PC-3 (cell line): ENCODE measurements at regions of chr14 and their contacts with region 1.

Region 1: DNA sequence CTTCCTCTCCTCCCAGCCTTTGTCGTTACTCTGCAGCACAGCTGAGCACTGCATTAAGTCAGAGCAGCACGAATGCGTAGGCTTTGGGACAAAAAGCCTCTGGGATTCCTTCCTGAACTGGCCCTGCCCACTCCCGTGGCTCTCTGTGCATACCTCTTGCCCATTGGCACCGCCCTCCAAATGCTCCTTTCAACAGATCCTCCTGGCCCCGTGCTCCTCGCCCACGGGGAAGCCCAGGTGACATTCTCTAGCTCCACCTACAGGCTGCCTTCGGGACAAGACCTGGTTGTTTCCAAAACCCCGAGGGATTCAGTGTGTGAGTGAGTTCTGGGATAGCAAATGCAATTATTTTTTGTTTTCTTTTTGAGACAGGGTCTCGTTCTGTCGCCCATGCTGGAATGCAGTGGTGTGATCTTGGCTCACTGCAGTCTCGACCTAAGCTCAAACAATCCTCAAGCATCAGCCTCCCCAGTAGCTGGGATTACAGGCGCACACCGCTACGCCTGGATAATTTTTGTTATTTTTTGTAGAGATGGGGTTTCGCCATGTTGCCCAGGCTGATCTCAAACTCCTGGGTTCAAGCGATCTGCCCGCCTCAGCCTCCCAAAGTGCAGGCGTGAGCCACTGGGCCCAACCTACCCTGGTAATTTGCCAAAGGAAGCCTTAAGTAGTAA is 17.9 kb upstream of the TDRD9 start:
- DNase-seq: peak; percentile 96
- ATAC-seq: peak; percentile 100
- H3K4me3 ChIP-seq: peak overlapping the region; percentile 20; the same call in 1 of the 2 replicates
- H3K27ac ChIP-seq: no peak overlapping the region
- H3K4me1 ChIP-seq: peaks cover 5% of the 10 kb centered on the region; the same call in 1 of the 2 replicates
- H3K27me3 ChIP-seq: no peaks in the 10 kb centered on the region
- CTCF ChIP-seq: peak; percentile 92

Region 2: DNA sequence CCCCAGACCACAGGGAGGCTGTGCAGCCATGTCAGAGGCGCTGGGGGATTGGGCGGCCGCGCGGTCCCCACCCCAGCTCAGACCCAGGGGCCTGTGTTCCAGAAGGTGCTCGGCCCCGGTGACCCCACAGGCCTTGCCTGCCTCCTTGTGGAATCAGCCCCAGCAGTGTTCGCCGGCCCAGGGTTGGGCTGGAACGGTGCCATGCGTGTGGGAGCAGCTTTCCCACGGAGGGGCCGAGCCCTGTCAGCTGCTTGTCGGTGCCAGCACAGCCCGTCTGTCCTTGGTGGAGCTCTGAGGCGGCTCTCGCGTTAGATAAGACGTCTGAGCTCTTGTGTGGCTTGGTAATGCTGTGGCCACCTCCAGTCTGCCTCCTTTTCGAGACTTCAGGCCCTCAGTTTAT is 186.3 kb before region 1 on chr14:
- CTCF ChIA-PET with region 1: no interaction called
- POLR2A ChIA-PET with region 1: no interaction called
- intact Hi-C with region 1: loop called (anchors 5 kb)
- DNase-seq: no peak
- ATAC-seq: no peak
- H3K4me3 ChIP-seq: no peak overlapping the region
- H3K27ac ChIP-seq: no peak overlapping the region
- H3K4me1 ChIP-seq: peaks cover 14% of the 10 kb centered on the region
- H3K27me3 ChIP-seq: no peaks in the 10 kb centered on the region
- CTCF ChIP-seq: no peak

Region 3: GRCh38 chr14:103808403-103809001 is 101.9 kb before region 1 on chr14:
- CTCF ChIA-PET with region 1: interaction called, 12 read pairs
- POLR2A ChIA-PET with region 1: no interaction called
- intact Hi-C with region 1: loop called (anchors 1 kb)
- DNase-seq: peak; percentile 88
- ATAC-seq: peak; percentile 91
- H3K4me3 ChIP-seq: no peak overlapping the region
- H3K27ac ChIP-seq: no peak overlapping the region
- H3K4me1 ChIP-seq: no peaks in the 10 kb centered on the region
- H3K27me3 ChIP-seq: no peaks in the 10 kb centered on the region
- CTCF ChIP-seq: peak; percentile 89

Region 4: GRCh38 chr14:103847451-103848188 is 62.8 kb before region 1 on chr14 and contains the start of gene PPP1R13B:
- CTCF ChIA-PET with region 1: no interaction called
- POLR2A ChIA-PET with region 1: no interaction called
- intact Hi-C with region 1: loop called (anchors 2 kb)
- DNase-seq: peak; percentile 94
- ATAC-seq: peak; percentile 92
- H3K4me3 ChIP-seq: peak within 1 kb of the TSS; percentile 81
- H3K27ac ChIP-seq: no peak within 1 kb of the TSS
- H3K4me1 ChIP-seq: peaks cover 23% of the 10 kb centered on the region; the same call in 1 of the 2 replicates
- H3K27me3 ChIP-seq: no peaks in the 10 kb centered on the region
- CTCF ChIP-seq: no peak
- total RNA-seq, gene PPP1R13B: 13.0 and 16.4 TPM in 2 replicates

Region 5: DNA sequence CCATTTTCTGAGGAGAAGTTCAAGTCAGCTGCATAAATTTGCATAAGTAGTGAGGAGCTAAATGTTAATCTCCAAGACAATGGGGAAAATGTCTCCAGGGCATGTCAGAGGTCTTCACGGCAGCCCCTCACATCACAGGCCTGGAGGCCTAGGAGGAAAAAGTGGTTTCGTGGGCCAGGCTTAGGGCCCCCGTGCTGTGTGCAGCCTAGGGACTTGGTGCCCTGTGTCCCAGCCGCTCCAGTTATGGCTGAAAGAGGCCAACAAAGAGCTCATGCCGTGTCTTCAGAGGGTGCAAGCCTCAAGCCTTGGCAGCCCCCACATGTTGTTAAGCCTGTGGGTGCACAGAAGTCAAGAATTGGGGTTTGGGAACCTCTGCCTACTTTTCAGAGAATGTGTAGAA is 73.8 kb after region 1 on chr14:
- CTCF ChIA-PET with region 1: interaction called, 16 read pairs
- POLR2A ChIA-PET with region 1: interaction called, 5 read pairs
- intact Hi-C with region 1: no loop called
- DNase-seq: no peak
- ATAC-seq: no peak
- H3K4me3 ChIP-seq: no peak overlapping the region
- H3K27ac ChIP-seq: no peak overlapping the region
- H3K4me1 ChIP-seq: no peaks in the 10 kb centered on the region
- H3K27me3 ChIP-seq: no peaks in the 10 kb centered on the region
- CTCF ChIP-seq: no peak